ENCODE measurements at regions of chr15 and their contacts with region 1.

Region 1: GRCh38 chr15:83574345-83574744 is 79.6 kb upstream of the ADAMTSL3 start:
- DNase-seq: no peak
- H3K4me3 Mint-ChIP-seq: no peak overlapping the region
- H3K27ac Mint-ChIP-seq: no peak overlapping the region
- H3K4me1 Mint-ChIP-seq: no peaks in the 10 kb centered on the region
- H3K27me3 Mint-ChIP-seq: peaks cover 2% of the 10 kb centered on the region

Region 2: DNA sequence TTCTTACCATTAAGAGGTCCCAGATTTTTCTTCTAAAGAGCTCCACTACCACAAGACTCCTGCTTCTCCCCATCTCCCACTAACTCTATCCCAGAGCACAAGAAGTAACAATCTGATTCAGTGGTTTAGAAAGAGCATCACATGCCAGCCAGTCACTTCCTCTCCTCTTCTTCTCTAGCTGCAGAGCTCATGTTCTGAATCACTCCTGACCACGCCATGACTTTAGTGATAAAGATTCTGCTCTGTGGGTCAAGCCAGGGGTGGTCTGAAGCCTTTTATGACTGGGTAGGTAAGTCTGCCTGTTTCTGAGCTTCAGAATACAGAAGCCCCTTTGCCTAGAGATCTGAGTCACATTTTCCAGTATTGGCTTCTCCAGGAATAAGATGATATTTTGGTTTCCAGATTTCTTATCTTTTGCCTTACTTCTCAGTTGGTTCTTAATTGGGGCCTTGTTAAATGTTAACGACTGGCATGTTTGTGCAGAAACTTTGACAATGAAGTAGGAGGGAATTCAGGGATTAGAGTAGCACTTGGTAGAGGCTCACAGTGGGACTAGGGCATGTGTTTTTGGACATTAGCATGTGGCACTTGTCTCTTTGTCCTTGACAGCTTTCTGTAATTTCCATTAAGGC is 51.9 kb after region 1 on chr15:
- CTCF ChIA-PET with region 1: no interaction called
- POLR2A ChIA-PET with region 1: no interaction called
- intact Hi-C with region 1: loop called (anchors 2 kb)
- DNase-seq: peak; percentile 10
- H3K4me3 Mint-ChIP-seq: no peak overlapping the region
- H3K27ac Mint-ChIP-seq: no peak overlapping the region
- H3K4me1 Mint-ChIP-seq: no peaks in the 10 kb centered on the region
- H3K27me3 Mint-ChIP-seq: no peaks in the 10 kb centered on the region